GM10248 (cell line): ENCODE measurements at regions of chr4 and their contacts with region 1.

Region 1: GRCh38 chr4:165164257-165164656 is 43.1 kb upstream of the KLHL2 start:
- DNase-seq: no peak
- CTCF ChIP-seq: no peak

Region 2: DNA sequence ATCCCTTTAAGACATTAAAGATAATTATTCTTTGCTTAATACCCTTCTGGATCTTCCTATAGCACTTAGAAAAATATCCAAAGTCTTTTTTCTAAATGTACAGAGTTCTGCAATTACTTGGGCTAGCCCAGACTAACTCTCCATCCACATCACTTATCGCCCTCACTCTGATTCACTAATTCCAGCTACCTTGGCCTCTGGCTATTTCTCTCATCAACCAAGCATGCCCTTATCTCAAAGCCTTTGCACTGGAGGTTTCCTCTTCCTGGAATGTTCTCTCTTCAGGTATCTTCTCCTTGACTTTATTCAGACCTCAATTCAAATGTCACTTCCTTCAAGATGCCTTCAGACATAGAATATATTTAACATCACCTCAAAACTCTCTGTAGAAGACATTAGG is 755.4 kb before region 1 on chr4:
- CTCF ChIA-PET with region 1: no interaction called
- POLR2A ChIA-PET with region 1: no interaction called
- DNase-seq: no peak
- CTCF ChIP-seq: no peak

Region 3: DNA sequence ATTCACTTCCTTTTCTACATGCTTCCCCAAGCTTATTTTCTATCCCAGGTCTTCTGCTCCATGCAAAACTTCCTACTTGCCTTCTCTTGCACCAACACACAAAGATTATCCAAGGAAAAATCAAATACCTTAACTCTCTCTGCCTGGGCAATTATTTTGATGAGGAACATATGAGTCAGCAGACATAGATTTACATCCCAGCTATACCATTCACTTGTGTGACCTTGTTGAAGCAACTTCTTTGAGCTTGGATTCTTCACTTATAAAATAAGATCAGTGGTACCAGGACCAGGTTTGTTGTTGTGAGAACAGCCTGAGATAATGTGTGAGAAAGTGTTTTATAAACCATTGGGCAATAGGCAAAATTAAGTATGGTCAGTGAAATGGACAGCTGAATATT is 12.5 kb before region 1 on chr4:
- CTCF ChIA-PET with region 1: no interaction called
- POLR2A ChIA-PET with region 1: no interaction called
- DNase-seq: no peak
- CTCF ChIP-seq: no peak

Region 4: DNA sequence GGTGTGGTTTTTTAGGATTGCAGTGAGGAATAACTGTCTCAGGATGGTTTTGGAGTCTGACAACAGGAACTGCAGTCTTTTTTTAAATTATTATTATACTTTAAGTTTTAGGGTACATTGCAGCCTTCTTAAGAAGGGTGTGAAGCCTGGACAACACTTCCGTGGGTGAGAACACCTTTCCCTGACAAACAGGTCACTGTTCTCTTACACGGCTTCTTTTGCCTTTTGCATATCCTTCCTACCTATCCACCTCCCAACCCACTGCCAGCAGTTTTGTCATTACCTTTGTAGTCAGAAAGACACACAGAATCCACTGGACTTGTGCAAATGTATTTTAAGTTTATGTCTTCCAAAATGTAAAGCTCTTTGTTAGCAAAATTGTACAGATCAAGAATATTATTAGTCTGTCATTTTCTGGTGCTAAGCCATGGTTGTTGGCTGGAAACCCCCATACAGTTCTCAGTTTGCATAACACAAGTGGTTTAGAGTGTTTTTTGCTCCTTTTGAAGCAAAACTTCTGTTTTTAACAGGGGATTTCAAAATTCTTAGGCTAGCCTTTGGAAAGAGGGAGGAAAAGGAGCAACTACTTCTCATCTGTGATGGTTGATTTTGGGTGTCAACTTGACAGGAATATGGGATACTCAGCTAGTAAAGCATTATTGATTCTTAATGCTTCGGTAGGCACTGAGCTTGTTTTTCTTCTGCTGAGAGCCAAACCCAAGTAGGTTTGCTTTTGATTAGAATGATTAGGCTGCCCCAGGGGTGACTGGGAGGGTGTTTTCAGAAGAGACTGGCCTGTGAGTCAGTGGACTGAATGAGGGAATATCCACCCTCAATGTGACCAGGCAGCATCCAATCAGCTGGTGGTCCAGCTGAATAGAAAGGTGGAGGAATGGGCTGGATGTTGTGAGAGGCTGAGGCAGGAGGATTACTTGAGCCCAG is 13.7 kb after region 1 on chr4:
- CTCF ChIA-PET with region 1: interaction called, 10 read pairs
- POLR2A ChIA-PET with region 1: no interaction called
- DNase-seq: peak; percentile 24
- CTCF ChIP-seq: no peak

Region 5: DNA sequence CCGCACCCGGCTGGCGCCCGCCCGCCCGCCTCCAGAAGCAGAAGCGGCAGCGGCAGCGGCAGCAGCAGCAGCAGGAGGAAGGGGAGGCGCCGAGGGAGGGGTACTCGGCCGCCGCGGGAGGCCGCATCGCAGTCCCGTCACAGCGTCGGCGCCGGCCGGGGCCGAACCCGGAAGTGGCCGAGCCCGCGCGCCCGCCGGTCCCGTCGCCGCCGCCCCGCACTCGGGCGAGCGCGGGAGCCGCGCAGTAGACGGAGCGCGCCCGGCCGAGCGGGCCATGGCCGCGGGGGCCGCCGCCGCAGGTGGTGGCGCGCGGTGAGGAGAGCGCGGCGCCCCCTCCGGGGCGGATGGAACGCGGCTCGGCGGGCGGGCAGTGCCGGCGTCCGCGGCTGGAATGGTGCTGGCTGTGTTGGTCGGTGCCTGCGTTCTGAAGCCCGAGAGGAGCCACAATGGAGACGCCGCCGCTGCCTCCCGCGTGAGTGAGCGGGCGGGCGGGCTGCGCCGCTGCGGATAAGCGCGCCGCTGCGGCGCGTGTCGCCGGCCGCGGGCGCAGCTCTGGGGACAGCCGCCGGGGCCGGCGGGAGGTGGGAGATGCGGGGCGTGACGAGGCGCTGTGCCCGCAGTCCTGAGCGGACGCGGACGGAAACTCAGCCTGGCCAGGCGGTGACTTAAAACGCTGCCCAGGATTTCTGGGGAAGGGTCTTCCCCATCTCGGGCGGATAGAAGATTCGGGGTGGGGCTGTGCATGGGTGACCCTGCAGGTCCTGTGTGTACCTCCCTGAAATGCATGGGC is 43.4 kb after region 1 on chr4 and contains the start of gene KLHL2:
- CTCF ChIA-PET with region 1: no interaction called
- POLR2A ChIA-PET with region 1: no interaction called
- DNase-seq: peak; percentile 88
- CTCF ChIP-seq: no peak